Esophagus muscularis mucosa (tissue), 4 donors: ENCODE measurements at regions of chr12 and their contacts with region 1.

Region 1: GRCh38 chr12:112906712-112907414 is at the start of gene OAS1:
- DNase-seq: no peak
- H3K4me3 ChIP-seq: peak within 1 kb of the TSS; percentile 52 to 62 (median 54)
- H3K27ac ChIP-seq: peak within 1 kb of the TSS; percentile 56 to 69 (median 68)
- H3K4me1 ChIP-seq: peaks cover 13 to 46% (median 45%) of the 10 kb centered on the region in 4 donors
- H3K27me3 ChIP-seq: no peaks in the 10 kb centered on the region
- CTCF ChIP-seq: no peak
- EP300 ChIP-seq: no peak
- POLR2A ChIP-seq: no peak
- total RNA-seq, gene OAS1: 9.9 to 10.4 (median 10.0) TPM

Region 2: DNA sequence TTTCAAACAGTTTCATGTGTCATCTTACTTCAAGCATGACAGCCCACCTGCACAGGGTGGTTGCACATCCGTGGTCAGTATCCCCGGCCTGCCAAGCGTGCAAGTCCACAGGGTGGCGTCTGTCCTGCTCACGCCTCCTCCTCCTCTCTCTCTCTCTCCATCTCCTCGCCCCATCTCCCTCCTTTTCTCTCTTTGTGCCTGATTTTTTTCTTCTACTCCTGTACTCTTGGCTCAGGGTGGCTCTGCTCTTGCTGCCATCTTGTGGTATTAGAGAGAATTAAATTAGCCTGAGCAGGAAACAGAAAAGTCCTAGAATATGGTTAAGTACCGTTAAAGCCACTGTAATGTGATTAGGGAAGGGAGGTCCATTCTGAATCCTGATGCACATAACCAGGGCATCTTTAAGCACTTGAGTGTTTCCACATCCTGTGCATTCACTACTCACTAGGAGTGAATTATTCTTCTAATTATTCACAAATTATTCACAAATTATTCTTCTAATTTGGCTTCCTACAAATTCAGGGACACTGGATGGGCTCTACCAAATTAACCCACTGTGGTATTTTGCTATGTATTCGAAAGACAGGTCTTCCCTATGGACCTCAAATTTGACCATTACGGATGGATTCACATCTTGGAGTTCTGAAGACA is 124.1 kb after region 1 on chr12:
- intact Hi-C with region 1: loop called (anchors 10 kb)
- DNase-seq: no peak
- H3K4me3 ChIP-seq: no peak overlapping the region
- H3K27ac ChIP-seq: no peak overlapping the region
- H3K4me1 ChIP-seq: peaks cover 0 to 4% (median 1%) of the 10 kb centered on the region in 4 donors
- H3K27me3 ChIP-seq: peaks cover 0 to 36% (median 0%) of the 10 kb centered on the region in 4 donors
- CTCF ChIP-seq: peak; percentile 64 to 79 (median 67)
- EP300 ChIP-seq: no peak
- POLR2A ChIP-seq: no peak